H1 (cell line): ENCODE measurements at regions of chr20 and their contacts with region 1.

Region 1: DNA sequence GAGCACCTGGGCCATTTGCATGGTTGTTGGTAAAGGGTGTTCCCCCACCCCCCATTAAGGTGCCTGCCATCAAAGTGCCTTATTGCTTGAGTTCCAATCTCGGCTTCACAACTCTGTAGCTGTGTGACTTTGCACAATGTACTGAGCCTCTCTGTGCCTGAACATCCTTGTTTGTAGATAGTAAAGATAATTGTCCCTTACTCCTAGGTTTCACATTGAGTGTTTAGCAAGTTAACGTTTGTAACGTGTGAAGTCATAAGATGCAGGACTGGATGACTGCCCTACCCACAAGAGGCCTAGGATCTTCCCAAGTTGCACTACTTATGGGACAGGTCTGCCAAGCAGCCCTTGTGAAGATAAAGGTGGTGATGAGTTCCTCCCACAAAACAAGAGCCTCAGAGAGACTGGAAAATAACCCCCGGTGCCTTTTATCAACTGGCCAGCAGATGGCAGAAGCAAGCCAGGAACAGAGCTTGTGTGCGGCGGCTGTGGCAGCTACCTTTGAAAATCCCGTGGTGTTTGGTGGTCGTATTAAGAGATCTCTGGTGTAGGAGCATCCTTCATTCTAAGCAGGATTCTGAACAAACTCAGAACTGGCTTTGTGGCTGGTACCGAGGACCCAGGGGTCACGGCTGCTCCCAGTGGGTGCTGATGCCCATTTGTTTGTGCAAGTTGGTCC is 99.0 kb downstream of the CDH26 start:
- DNase-seq: peak; percentile 44 to 80
- H3K4me3 ChIP-seq: no peak overlapping the region
- H3K27ac ChIP-seq: no peak overlapping the region
- H3K4me1 ChIP-seq: peaks cover 2 to 11% (median 7%) of the 10 kb centered on the region in 4 experiments; a peak in 6 of 7 replicates
- H3K27me3 ChIP-seq: no peaks in the 10 kb centered on the region; a peak in 1 of 7 replicates
- CTCF ChIP-seq: peak; percentile 65 to 79 (median 74)
- EP300 ChIP-seq: no peak
- POLR2A ChIP-seq: no peak
- RAD21 ChIP-seq: peak; percentile 92 to 94

Region 2: DNA sequence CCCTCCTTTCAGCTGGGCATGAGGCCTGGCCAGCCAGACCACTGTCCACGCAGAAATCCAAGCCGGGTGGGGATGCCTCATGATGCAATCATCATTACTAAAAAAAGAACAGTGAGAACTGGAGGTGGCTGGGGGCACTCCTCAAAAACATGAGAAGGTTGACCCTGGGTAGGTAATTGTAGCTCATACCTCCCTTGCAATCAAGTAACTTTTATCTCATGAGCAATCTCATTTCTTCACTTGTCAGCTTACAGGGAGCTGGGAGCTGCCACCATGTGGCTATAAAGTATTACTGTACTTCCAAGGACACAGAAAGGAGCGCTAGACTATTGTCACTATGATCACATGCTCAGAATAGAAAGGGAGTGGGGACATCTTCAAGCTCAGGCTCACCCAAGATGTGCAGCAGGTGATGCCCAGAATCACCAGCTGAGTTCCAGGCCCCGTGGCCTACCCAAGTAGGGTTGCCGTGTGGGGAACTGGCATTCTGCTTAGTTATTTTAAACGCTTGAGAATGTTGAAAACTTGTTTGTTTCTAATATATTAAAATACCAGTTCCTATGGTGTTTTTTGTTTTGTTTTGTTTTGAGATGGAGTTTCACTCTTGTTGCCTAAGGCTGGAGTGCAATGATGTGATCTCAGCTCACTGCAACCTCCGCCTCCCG is 102.0 kb before region 1 on chr20:
- CTCF ChIA-PET with region 1: interaction called, 11 read pairs
- POLR2A ChIA-PET with region 1: no interaction called
- DNase-seq: no peak
- H3K4me3 ChIP-seq: no peak overlapping the region
- H3K27ac ChIP-seq: no peak overlapping the region
- H3K4me1 ChIP-seq: 0 out of 7 replicates have a peak, but pooled peaks cover 0 to 2% (median 0%) of the 10 kb centered on the region in 4 experiments
- H3K27me3 ChIP-seq: no peaks in the 10 kb centered on the region; a peak in 2 of 7 replicates
- CTCF ChIP-seq: peak in 2 of 3 experiments; percentile 40 to 47; a peak in 3 of 4 replicates
- EP300 ChIP-seq: no peak
- POLR2A ChIP-seq: no peak
- RAD21 ChIP-seq: peak in 1 of 2 experiments; percentile 39; a peak in 2 of 4 replicates

Region 3: GRCh38 chr20:59992596-59992995 is 64.7 kb before region 1 on chr20:
- CTCF ChIA-PET with region 1: interaction called, 12 read pairs
- POLR2A ChIA-PET with region 1: no interaction called
- DNase-seq: no peak
- H3K4me3 ChIP-seq: no peak overlapping the region
- H3K27ac ChIP-seq: no peak overlapping the region
- H3K4me1 ChIP-seq: peaks cover 2 to 12% (median 6%) of the 10 kb centered on the region in 4 experiments; a peak in 5 of 7 replicates
- H3K27me3 ChIP-seq: 0 out of 7 replicates have a peak, but pooled peaks cover 0 to 2% (median 0%) of the 10 kb centered on the region in 4 experiments
- CTCF ChIP-seq: no peak
- EP300 ChIP-seq: no peak
- POLR2A ChIP-seq: no peak
- RAD21 ChIP-seq: no peak

Region 4: GRCh38 chr20:60069656-60070055 is 12.4 kb after region 1 on chr20:
- CTCF ChIA-PET with region 1: interaction called, 12 read pairs
- POLR2A ChIA-PET with region 1: no interaction called
- DNase-seq: no peak
- H3K4me3 ChIP-seq: no peak overlapping the region
- H3K27ac ChIP-seq: no peak overlapping the region
- H3K4me1 ChIP-seq: no peaks in the 10 kb centered on the region
- H3K27me3 ChIP-seq: peaks cover 0 to 4% (median 0%) of the 10 kb centered on the region in 4 experiments; a peak in 2 of 7 replicates
- CTCF ChIP-seq: no peak
- EP300 ChIP-seq: no peak
- POLR2A ChIP-seq: no peak
- RAD21 ChIP-seq: no peak

Region 5: GRCh38 chr20:60210779-60211617 is 153.7 kb after region 1 on chr20:
- CTCF ChIA-PET with region 1: interaction called, 22 read pairs
- POLR2A ChIA-PET with region 1: no interaction called
- DNase-seq: peak; percentile 34 to 90
- H3K4me3 ChIP-seq: no peak overlapping the region
- H3K27ac ChIP-seq: no peak overlapping the region
- H3K4me1 ChIP-seq: no peaks in the 10 kb centered on the region; a peak in 1 of 7 replicates
- H3K27me3 ChIP-seq: no peaks in the 10 kb centered on the region; a peak in 1 of 7 replicates
- CTCF ChIP-seq: peak; percentile 87 to 93 (median 92)
- EP300 ChIP-seq: no peak
- POLR2A ChIP-seq: no peak
- RAD21 ChIP-seq: peak; percentile 93 to 95

Region 6: GRCh38 chr20:60453388-60454246 is 396.4 kb after region 1 on chr20:
- CTCF ChIA-PET with region 1: interaction called, 24 read pairs
- POLR2A ChIA-PET with region 1: no interaction called
- DNase-seq: peak; percentile 36 to 67
- H3K4me3 ChIP-seq: no peak overlapping the region
- H3K27ac ChIP-seq: no peak overlapping the region
- H3K4me1 ChIP-seq: no peaks in the 10 kb centered on the region
- H3K27me3 ChIP-seq: no peaks in the 10 kb centered on the region; a peak in 3 of 7 replicates
- CTCF ChIP-seq: peak; percentile 73 to 92 (median 88)
- EP300 ChIP-seq: no peak
- POLR2A ChIP-seq: no peak
- RAD21 ChIP-seq: peak; percentile 90